H1 (cell line): ENCODE measurements at regions of chr22 and their contacts with region 1.

Region 1: GRCh38 chr22:25766418-25766817 is 24.4 kb downstream of the MYO18B start:
- DNase-seq: no peak
- H3K4me3 ChIP-seq: no peak overlapping the region
- H3K27ac ChIP-seq: no peak overlapping the region
- H3K4me1 ChIP-seq: no peaks in the 10 kb centered on the region
- H3K27me3 ChIP-seq: no peaks in the 10 kb centered on the region
- CTCF ChIP-seq: no peak
- EP300 ChIP-seq: no peak
- POLR2A ChIP-seq: no peak
- RAD21 ChIP-seq: no peak

Region 2: DNA sequence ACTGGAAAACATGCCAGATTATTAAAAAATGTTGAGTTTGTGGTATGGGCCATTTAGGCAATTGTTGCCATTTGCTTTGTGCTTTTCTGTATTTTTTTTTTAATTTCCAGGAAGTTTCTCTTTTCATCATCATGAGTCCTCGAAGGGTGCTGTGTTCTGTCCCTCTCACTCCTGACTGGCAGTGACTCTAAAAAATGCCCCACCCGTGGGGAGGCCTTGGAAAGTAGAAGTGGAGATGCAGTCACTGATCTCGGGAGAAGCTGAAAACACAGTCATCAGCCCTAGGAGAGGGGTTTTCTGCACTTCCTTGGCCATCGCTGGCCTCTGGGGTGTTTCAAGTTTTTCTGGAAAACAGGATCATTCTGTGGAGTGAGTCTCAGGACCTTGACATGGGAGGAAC is 300.5 kb before region 1 on chr22:
- CTCF ChIA-PET with region 1: interaction called, 14 read pairs
- POLR2A ChIA-PET with region 1: no interaction called
- DNase-seq: no peak
- H3K4me3 ChIP-seq: no peak overlapping the region
- H3K27ac ChIP-seq: no peak overlapping the region
- H3K4me1 ChIP-seq: no peaks in the 10 kb centered on the region
- H3K27me3 ChIP-seq: no peaks in the 10 kb centered on the region
- CTCF ChIP-seq: no peak
- EP300 ChIP-seq: no peak
- POLR2A ChIP-seq: no peak
- RAD21 ChIP-seq: no peak

Region 3: GRCh38 chr22:25645266-25645665 is 121.2 kb before region 1 on chr22:
- CTCF ChIA-PET with region 1: no interaction called
- POLR2A ChIA-PET with region 1: no interaction called
- DNase-seq: no peak
- H3K4me3 ChIP-seq: no peak overlapping the region
- H3K27ac ChIP-seq: peak overlapping the region; percentile 8; the same call in 1 of the 2 replicates
- H3K4me1 ChIP-seq: peaks cover 0 to 6% (median 0%) of the 10 kb centered on the region in 4 experiments; a peak in 5 of 7 replicates
- H3K27me3 ChIP-seq: no peaks in the 10 kb centered on the region
- CTCF ChIP-seq: no peak
- EP300 ChIP-seq: no peak
- POLR2A ChIP-seq: no peak
- RAD21 ChIP-seq: no peak

Region 4: DNA sequence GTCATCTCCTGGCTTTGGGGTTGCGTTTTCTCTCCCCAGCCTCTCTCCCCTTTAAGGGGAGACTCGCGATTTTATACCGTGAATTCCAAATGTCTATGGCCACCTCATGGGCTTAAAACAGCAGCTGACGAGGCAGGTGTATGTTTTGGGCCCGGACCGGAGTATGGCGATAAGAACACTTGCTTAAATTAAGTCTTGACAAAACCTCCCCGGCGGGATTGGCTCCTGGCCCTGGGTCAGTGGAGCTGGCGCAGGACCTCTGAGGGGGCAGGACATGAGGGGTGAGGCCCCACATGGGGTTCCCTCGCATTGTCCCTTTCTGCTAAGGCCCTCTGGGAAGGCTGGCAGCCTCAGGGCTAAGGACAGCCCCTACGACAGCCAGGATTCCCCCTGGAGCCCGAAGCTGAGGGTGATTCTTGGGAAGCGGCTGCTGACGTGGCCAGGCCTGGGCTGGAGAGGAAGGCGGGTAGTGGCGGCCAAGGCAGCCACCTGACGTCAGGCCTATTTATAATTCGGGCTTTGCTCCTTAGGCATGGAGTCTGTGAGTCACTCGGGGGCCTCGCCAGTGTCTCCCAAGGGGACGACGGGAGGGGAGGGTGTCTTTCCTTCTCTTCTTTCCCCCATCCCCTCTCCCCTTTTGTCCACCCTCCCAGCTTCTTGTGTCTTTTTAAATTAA is 11.8 kb before region 1 on chr22:
- CTCF ChIA-PET with region 1: interaction called, 24 read pairs
- POLR2A ChIA-PET with region 1: no interaction called
- DNase-seq: no peak
- H3K4me3 ChIP-seq: no peak overlapping the region
- H3K27ac ChIP-seq: no peak overlapping the region
- H3K4me1 ChIP-seq: no peaks in the 10 kb centered on the region
- H3K27me3 ChIP-seq: no peaks in the 10 kb centered on the region
- CTCF ChIP-seq: no peak
- EP300 ChIP-seq: no peak
- POLR2A ChIP-seq: no peak
- RAD21 ChIP-seq: no peak

Region 5: GRCh38 chr22:25780673-25781072 is 14.3 kb after region 1 on chr22:
- CTCF ChIA-PET with region 1: no interaction called
- POLR2A ChIA-PET with region 1: no interaction called
- DNase-seq: no peak
- H3K4me3 ChIP-seq: no peak overlapping the region
- H3K27ac ChIP-seq: no peak overlapping the region
- H3K4me1 ChIP-seq: no peaks in the 10 kb centered on the region
- H3K27me3 ChIP-seq: no peaks in the 10 kb centered on the region
- CTCF ChIP-seq: no peak
- EP300 ChIP-seq: no peak
- POLR2A ChIP-seq: no peak
- RAD21 ChIP-seq: no peak

Region 6: GRCh38 chr22:25845985-25846745 is 79.7 kb after region 1 on chr22:
- CTCF ChIA-PET with region 1: no interaction called
- POLR2A ChIA-PET with region 1: no interaction called
- DNase-seq: peak in 1 of 2 experiments; percentile 35
- H3K4me3 ChIP-seq: no peak overlapping the region
- H3K27ac ChIP-seq: no peak overlapping the region
- H3K4me1 ChIP-seq: peaks cover 0 to 3% (median 1%) of the 10 kb centered on the region in 4 experiments; a peak in 2 of 7 replicates
- H3K27me3 ChIP-seq: no peaks in the 10 kb centered on the region
- CTCF ChIP-seq: no peak
- EP300 ChIP-seq: no peak
- POLR2A ChIP-seq: no peak
- RAD21 ChIP-seq: no peak